RWPE1 (cell line): ENCODE measurements at regions of chr7 and their contacts with region 1.

Region 1: DNA sequence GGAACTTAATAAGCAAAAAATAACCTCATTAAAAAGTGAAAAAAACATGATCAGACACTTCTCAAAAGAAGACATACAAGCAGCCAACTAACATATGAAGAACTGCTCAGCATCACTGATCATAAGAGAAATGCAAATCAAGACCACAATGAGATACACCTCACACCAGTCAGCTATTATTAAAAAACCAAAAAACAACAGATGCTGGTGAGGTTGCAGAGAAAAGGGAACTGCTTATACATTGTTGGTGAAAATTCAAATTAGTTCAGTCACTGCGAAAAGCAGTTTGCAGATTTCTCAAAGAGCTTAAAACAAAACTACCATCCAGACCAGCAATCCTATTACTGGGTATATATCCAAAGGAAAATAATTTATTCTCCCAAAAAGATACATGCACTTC is 513.3 kb downstream of the MDFIC start:
- DNase-seq: no peak
- H3K27ac ChIP-seq: no peak overlapping the region
- CTCF ChIP-seq: no peak

Region 2: GRCh38 chr7:115267503-115267902 is 167.7 kb before region 1 on chr7:
- CTCF ChIA-PET with region 1: no interaction called
- POLR2A ChIA-PET with region 1: no interaction called
- DNase-seq: no peak
- H3K27ac ChIP-seq: no peak overlapping the region
- CTCF ChIP-seq: no peak

Region 3: GRCh38 chr7:115679976-115680375 is 244.8 kb after region 1 on chr7:
- CTCF ChIA-PET with region 1: interaction called, 10 read pairs
- POLR2A ChIA-PET with region 1: no interaction called
- DNase-seq: peak; percentile 11
- H3K27ac ChIP-seq: no peak overlapping the region
- CTCF ChIP-seq: no peak; the same call in 1 of the 2 replicates